Posterior cingulate gyrus (tissue), 11 donors: ENCODE measurements at regions of chr17 and their contacts with region 1.

Region 1: GRCh38 chr17:3636154-3636907 is at the starts of genes CTNS and SHPK:
- DNase-seq: peak; percentile 94 to 100 (median 98)

Region 2: GRCh38 chr17:3048767-3049471 is 587.4 kb before region 1 on chr17:
- intact Hi-C with region 1: loop called (anchors 5 kb)
- DNase-seq: peak; percentile 95 to 100 (median 98)

Region 3: GRCh38 chr17:3668279-3669085 is 32.2 kb after region 1 on chr17 and contains the starts of genes EMC6 and TAX1BP3:
- intact Hi-C with region 1: loop called (anchors 1 kb)
- DNase-seq: peak; percentile 96 to 100 (median 98)

Region 4: DNA sequence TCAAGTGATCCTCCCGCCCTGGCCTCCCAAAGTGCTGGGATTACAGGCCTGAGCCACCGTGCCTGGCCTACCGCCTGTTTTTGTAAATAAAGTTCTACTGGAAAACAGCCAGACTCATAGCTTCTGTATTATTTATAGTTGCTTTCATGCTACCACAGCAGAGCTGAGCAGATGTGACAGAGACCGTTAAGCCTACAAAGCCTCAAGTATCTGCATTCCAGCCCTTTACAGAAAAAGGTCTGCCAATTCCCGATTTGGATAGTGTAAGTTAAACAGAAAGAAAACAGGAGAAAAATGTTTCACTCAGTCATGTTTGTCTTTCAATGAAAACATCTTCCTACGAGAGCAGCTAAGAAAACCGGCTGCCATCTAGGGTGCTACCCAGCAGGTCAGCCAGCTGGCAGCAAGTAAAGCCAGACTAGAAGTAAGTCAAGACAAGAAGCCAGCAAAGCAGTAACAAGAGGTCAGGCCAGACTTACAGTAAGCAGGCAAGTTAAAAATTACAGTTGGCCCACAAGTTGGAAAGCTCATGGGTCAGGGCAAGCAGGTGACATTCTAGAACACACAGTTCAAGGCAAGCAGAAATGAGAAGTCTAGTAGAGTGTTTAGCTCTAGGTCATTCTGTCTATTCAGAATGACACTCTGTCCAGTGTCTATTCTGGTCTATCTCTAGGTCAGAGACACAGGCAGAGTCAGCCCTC is 192.0 kb after region 1 on chr17:
- intact Hi-C with region 1: no loop called
- DNase-seq: no peak